CD4-positive, alpha-beta T cell (primary cell): ENCODE measurements at regions of chr1 and their contacts with region 1.

Region 1: DNA sequence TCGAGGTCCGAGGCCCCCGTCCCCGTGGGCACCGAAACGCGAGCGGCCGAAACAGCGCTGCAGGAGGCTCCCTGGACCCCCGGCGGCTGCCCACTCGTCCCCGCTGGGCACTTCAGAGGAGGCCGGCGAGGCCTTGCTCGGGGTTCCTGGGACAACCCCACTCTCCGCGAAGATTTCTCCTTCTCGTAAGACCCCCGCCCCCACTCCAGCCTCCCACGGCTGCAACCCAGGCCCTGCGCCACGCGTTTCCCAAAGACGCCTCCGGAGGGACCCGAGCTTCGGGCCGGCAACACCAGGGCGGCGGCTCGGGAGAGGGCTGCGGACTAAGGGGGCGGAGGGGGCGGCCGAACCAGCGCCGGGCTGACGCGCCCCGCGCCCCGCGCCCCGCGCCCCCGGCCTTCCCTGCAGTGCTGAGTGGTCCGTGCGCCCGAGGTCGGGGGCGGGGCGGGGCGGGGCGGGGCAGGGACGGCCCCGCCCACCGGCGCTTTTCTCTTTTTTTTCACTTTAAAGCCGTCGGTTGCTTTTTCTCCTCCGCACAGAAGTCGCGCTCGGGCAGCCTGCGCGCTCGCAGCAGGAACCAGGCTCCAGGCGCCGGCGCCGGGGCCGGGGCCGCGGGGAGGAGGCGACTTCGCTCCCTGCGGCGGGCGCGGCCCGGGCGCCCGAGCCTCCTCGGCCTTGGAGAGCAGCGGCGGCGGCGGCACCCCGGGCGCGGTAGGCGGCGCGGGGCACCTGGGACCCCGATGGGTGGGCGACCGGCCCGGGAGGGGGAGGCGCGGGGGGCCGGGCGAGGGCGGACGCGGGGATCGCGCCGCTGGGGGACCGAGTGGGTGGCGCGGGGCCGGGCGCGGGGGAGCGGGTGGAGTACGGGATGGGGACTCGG is at the start of gene SPSB1:
- DNase-seq: peak; percentile 48 to 87 (median 64)
- ATAC-seq: peak; percentile 62
- H3K4me3 ChIP-seq: peak within 1 kb of the TSS; percentile 77
- H3K4me3 Mint-ChIP-seq: peak within 1 kb of the TSS; percentile 86
- H3K27ac ChIP-seq: no peak within 1 kb of the TSS
- H3K27ac Mint-ChIP-seq: peak within 1 kb of the TSS; percentile 48
- H3K4me1 ChIP-seq: peaks cover 33% of the 10 kb centered on the region
- H3K4me1 Mint-ChIP-seq: peaks cover 29% of the 10 kb centered on the region
- H3K27me3 ChIP-seq: no peaks in the 10 kb centered on the region
- H3K27me3 Mint-ChIP-seq: no peaks in the 10 kb centered on the region
- CTCF ChIP-seq: no peak
- total RNA-seq, gene SPSB1: 1.9 to 2.3 TPM

Region 2: DNA sequence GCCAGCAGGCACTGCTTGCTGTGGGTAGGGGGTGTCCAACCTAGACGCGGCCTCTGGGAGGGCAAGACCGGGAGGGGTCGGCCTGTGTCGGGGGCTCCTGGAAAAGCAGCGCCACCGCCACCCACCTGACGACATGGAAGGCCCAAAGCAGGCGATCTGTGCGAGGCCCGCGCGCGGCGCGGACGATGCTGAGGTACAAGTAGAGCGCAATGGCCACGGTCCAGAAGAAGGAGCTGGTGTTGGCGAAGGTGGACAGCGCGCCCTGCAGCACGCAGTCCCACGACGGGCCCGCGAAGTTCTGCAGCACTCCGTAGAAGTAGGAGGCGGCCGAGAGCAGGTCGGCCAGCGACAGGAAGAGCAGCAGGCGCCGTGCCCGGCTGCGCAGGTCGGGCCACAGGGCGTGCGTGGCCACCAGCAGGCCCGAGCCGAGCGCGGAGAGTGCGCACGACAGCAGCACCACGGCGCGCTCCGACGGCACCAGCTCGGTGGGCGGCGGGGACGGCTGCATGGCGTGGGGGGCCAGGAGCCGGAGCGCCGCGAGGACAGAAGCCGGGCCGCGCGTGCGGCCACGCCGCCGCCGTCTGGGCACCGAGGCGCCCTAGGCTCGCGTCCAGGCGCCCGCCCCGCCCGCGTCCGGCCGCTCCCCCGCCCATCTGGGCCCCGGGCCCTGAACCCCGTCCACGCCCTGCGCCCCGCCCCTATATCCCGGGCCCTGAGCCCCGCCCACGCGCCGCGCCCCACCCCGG is 163.9 kb before region 1 on chr1 and contains the start of gene GPR157:
- CTCF ChIA-PET with region 1: no interaction called
- POLR2A ChIA-PET with region 1: interaction called, 3 read pairs
- intact Hi-C with region 1: loop called in 1 of 2 experiments (anchors 5 kb)
- DNase-seq: peak; percentile 65 to 93 (median 81)
- ATAC-seq: peak; percentile 86
- H3K4me3 ChIP-seq: peak within 1 kb of the TSS; percentile 70
- H3K4me3 Mint-ChIP-seq: peak within 1 kb of the TSS; percentile 91
- H3K27ac ChIP-seq: peak within 1 kb of the TSS; percentile 56
- H3K27ac Mint-ChIP-seq: peak within 1 kb of the TSS; percentile 70
- H3K4me1 ChIP-seq: peaks cover 25% of the 10 kb centered on the region
- H3K4me1 Mint-ChIP-seq: peaks cover 40% of the 10 kb centered on the region
- H3K27me3 ChIP-seq: no peaks in the 10 kb centered on the region
- H3K27me3 Mint-ChIP-seq: no peaks in the 10 kb centered on the region
- CTCF ChIP-seq: no peak
- total RNA-seq, gene GPR157: 2.1 to 5.1 TPM

Region 3: DNA sequence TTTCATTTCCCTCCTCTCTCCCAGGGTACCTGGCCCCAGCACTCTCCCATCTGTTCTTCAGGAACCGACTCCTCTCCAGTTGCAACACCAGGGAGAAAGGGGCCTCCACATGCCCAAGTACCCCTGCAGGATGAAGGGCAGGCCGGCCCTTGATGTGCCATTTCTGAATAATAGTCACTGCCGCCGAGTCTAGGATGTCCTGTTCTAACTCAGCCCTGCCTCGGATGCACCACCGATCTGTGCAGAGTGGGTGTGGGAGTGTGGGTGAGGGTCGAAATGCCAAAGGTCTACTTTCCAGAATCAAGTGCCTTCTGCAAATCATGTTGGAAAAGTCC is 25.3 kb before region 1 on chr1:
- CTCF ChIA-PET with region 1: interaction called, 27 read pairs
- POLR2A ChIA-PET with region 1: interaction called, 4 read pairs
- intact Hi-C with region 1: no loop called
- DNase-seq: no peak
- ATAC-seq: no peak
- H3K4me3 ChIP-seq: no peak overlapping the region
- H3K4me3 Mint-ChIP-seq: no peak overlapping the region
- H3K27ac ChIP-seq: no peak overlapping the region
- H3K27ac Mint-ChIP-seq: no peak overlapping the region
- H3K4me1 ChIP-seq: peaks cover 4% of the 10 kb centered on the region
- H3K4me1 Mint-ChIP-seq: peaks cover 7% of the 10 kb centered on the region
- H3K27me3 ChIP-seq: no peaks in the 10 kb centered on the region
- H3K27me3 Mint-ChIP-seq: no peaks in the 10 kb centered on the region
- CTCF ChIP-seq: no peak

Region 4: GRCh38 chr1:9455487-9456234 is 163.1 kb after region 1 on chr1:
- CTCF ChIA-PET with region 1: interaction called, 41 read pairs
- POLR2A ChIA-PET with region 1: interaction called, 3 read pairs
- intact Hi-C with region 1: loop called (anchors 1 kb)
- DNase-seq: peak; percentile 52 to 84 (median 64)
- ATAC-seq: peak; percentile 70
- H3K4me3 ChIP-seq: no peak overlapping the region
- H3K4me3 Mint-ChIP-seq: no peak overlapping the region
- H3K27ac ChIP-seq: no peak overlapping the region
- H3K27ac Mint-ChIP-seq: no peak overlapping the region
- H3K4me1 ChIP-seq: peaks cover 3% of the 10 kb centered on the region
- H3K4me1 Mint-ChIP-seq: no peaks in the 10 kb centered on the region
- H3K27me3 ChIP-seq: no peaks in the 10 kb centered on the region
- H3K27me3 Mint-ChIP-seq: no peaks in the 10 kb centered on the region
- CTCF ChIP-seq: peak; percentile 87

Region 5: DNA sequence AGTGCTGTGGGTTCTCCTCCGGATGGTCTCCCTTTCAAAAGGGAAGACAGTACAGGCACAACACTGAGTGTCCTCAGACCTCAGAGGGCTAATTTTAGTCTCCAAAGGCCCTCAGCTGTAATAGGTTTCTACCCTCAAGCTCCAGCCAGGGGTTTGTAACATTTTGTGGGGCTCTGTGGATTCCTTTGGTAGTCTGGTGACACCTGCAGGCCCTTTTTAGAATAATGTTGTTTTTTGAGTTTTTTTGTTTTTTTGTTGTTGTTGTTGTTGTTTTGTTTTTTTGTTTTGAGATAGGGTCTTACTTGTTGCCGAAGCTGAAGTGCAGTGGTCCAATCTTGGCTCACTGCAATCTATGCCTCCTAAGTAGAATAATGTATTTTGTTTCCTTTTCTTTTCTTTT is 281.1 kb after region 1 on chr1:
- CTCF ChIA-PET with region 1: no interaction called
- POLR2A ChIA-PET with region 1: interaction called, 3 read pairs
- intact Hi-C with region 1: loop called in 1 of 2 experiments (anchors 5 kb)
- DNase-seq: peak in 2 of 14 experiments; percentile 22 to 45
- ATAC-seq: no peak
- H3K4me3 ChIP-seq: no peak overlapping the region
- H3K4me3 Mint-ChIP-seq: no peak overlapping the region
- H3K27ac ChIP-seq: no peak overlapping the region
- H3K27ac Mint-ChIP-seq: no peak overlapping the region
- H3K4me1 ChIP-seq: no peaks in the 10 kb centered on the region
- H3K4me1 Mint-ChIP-seq: no peaks in the 10 kb centered on the region
- H3K27me3 ChIP-seq: no peaks in the 10 kb centered on the region
- H3K27me3 Mint-ChIP-seq: no peaks in the 10 kb centered on the region
- CTCF ChIP-seq: no peak

Region 6: DNA sequence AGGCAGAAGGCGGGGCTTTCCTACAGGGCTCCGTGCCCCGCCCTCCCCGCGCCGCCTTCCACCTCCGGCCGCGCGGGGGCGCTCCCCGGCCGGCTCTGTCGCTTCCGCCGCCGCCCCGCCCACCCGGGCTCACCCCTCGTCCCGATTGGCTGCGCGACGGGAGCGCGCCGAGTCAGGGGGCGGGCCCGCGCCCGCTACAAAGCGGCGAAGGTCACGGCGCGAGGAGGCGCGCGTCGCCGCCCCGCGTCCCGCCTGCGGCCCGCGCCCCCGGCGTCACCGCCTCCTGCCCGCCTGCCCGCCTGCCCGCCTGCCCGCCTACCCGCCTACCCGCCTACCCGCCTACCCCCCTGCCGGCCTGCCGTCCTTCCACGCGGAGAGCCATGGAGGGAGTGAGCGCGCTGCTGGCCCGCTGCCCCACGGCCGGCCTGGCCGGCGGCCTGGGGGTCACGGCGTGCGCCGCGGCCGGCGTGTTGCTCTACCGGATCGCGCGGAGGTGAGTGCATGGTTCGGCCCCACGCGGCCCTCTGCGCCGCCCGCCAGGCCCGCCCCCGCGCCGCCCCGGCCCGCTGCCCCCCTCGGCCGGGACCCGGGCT is 296.0 kb after region 1 on chr1 and contains the start of gene TMEM201:
- CTCF ChIA-PET with region 1: no interaction called
- POLR2A ChIA-PET with region 1: no interaction called
- intact Hi-C with region 1: loop called in 1 of 2 experiments (anchors 5 kb)
- DNase-seq: peak; percentile 87 to 98 (median 94)
- ATAC-seq: peak; percentile 91
- H3K4me3 ChIP-seq: peak within 1 kb of the TSS; percentile 66
- H3K4me3 Mint-ChIP-seq: peak within 1 kb of the TSS; percentile 92
- H3K27ac ChIP-seq: no peak within 1 kb of the TSS
- H3K27ac Mint-ChIP-seq: peak within 1 kb of the TSS; percentile 65
- H3K4me1 ChIP-seq: peaks cover 38% of the 10 kb centered on the region
- H3K4me1 Mint-ChIP-seq: peaks cover 33% of the 10 kb centered on the region
- H3K27me3 ChIP-seq: no peaks in the 10 kb centered on the region
- H3K27me3 Mint-ChIP-seq: no peaks in the 10 kb centered on the region
- CTCF ChIP-seq: peak; percentile 6
- total RNA-seq, gene TMEM201: 9.1 to 9.2 TPM